RWPE1 (cell line): ENCODE measurements at regions of chr22 and their contacts with region 1.

Region 1: DNA sequence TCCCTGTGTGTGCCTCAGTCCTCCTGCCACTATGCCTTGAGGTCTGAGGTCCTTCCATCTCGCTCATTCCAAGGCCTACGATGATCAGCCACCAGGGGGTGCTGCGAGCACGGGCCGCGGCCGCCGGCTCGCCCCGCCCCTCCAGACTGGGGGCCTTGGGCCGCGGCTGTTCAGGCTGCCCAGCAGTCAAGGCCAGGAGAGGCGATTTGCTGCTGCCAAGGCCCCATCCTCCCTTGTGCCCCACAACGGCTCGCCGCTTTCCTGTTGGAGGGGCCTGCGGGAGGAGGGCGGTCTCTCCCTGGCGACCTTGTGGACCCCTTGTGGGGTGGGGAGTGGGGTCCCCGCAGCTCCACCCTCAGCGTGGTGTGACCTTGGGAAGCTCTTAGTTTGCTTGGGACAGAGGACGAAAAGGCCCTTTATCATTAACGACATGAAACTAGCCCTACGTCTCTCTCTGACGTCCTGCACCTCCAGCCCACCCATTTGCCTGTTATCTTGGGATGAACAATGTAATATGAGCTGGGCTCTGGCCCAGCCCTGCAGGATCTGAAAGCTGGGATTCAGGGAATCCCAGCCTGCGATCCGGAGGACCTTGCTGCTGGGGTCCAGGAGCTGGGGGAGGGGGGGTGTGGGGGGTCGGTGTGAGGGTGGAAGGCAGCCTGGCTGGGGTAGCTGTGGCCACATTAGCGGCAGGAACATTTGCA is 5.3 kb upstream of the GALR3 start:
- DNase-seq: peak; percentile 64
- H3K27ac ChIP-seq: peak overlapping the region; percentile 65
- CTCF ChIP-seq: peak; percentile 94

Region 2: DNA sequence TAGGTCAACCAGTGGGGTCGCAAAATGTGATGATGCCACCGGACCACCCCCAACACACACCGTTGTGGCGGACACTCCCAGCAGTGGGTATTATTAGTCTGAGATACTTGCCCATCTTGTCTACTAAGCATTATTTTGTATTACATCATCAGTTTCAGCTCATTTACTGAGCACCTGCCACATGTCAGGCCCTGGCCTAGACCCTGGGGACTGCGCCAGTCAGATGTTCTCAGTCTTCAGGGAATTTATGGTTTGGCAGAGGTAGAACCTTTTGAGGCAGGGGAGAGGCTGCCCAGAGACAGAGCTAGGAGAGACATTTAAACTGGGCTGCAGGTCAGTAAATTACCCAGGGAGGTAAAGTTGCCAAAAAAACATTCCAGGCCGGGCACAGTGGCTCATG is 53.2 kb before region 1 on chr22:
- CTCF ChIA-PET with region 1: no interaction called
- POLR2A ChIA-PET with region 1: no interaction called
- DNase-seq: no peak
- H3K27ac ChIP-seq: peak overlapping the region; percentile 45
- CTCF ChIP-seq: no peak

Region 3: DNA sequence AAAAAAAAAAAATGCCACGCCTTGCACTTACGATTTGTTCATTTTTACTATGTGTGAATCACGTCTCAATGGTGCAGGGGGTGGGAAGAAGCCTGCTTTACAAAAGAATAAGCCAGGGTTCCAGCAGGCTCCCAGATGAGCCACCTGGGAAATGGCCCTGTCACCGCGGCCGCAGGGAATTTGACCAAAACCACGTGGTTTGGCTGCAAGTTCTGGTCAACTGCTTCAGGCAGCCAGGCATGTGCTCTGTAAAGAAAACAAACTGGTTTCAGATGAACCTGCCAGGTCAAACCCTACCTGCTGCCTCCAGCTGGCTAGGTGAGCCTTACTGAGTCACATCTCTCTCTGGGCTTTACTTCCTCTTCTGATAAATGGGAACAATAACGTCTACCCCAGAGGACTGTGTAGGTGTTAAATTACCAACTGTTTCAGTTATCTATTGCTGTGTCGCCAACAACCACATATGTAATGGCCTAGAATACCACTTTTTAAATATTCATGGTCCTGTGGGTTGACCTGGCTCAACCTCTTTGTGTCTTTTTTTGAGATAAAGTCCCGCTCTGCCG is 40.7 kb before region 1 on chr22:
- CTCF ChIA-PET with region 1: no interaction called
- POLR2A ChIA-PET with region 1: no interaction called
- DNase-seq: peak; percentile 77
- H3K27ac ChIP-seq: peak overlapping the region; percentile 93
- CTCF ChIP-seq: no peak

Region 4: GRCh38 chr22:37855462-37855861 is 37.6 kb after region 1 on chr22:
- CTCF ChIA-PET with region 1: no interaction called
- POLR2A ChIA-PET with region 1: no interaction called
- DNase-seq: no peak
- H3K27ac ChIP-seq: no peak overlapping the region
- CTCF ChIP-seq: no peak

Region 5: DNA sequence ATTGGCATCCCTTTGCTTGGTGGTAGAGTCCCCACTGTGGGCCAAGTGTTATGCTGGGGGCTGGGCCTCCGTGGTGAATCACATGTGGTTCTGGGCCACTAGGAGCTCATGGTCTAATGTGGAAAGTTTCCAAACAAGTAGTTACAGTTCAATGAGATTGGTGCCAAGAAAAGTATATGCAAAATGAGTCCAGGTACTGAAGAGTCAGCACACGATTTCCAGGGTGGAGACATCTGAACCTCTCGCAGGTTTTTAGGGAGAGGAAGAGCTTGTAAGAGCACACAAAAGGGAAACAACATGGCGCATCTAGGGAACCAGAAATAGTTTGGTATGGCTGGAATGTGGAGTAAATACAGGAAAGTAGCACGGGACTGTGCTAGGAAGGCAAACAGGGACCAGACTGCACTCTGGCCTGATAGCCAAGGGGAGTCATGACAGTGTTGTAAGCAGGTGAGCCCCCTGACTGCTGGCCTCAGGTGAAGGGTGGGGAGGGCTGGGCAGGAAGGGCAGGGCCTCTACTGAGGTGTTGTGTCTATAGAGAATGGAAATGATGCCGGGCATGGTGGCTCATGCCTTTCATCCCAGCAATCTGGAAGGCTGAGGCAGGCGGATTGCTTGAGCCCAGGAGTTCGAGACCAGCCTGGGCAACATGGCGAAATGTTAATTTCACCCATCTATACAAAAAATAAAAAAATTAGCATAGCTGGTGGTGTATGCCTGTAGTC is 148.2 kb after region 1 on chr22:
- CTCF ChIA-PET with region 1: interaction called, 14 read pairs
- POLR2A ChIA-PET with region 1: no interaction called
- DNase-seq: no peak
- H3K27ac ChIP-seq: no peak overlapping the region
- CTCF ChIP-seq: no peak